Activated naive CD4-positive, alpha-beta T cell treated with anti-CD3 and anti-CD28 coated beads for 36 hours (primary cell): ENCODE measurements at regions of chr9 and their contacts with region 1.

Region 1: GRCh38 chr9:6667633-6668280 is 22.2 kb upstream of the GLDC start:
- DNase-seq: no peak
- H3K4me3 Mint-ChIP-seq: no peak overlapping the region
- H3K27ac Mint-ChIP-seq: no peak overlapping the region
- H3K4me1 Mint-ChIP-seq: peaks cover 2% of the 10 kb centered on the region
- H3K27me3 Mint-ChIP-seq: no peaks in the 10 kb centered on the region

Region 2: DNA sequence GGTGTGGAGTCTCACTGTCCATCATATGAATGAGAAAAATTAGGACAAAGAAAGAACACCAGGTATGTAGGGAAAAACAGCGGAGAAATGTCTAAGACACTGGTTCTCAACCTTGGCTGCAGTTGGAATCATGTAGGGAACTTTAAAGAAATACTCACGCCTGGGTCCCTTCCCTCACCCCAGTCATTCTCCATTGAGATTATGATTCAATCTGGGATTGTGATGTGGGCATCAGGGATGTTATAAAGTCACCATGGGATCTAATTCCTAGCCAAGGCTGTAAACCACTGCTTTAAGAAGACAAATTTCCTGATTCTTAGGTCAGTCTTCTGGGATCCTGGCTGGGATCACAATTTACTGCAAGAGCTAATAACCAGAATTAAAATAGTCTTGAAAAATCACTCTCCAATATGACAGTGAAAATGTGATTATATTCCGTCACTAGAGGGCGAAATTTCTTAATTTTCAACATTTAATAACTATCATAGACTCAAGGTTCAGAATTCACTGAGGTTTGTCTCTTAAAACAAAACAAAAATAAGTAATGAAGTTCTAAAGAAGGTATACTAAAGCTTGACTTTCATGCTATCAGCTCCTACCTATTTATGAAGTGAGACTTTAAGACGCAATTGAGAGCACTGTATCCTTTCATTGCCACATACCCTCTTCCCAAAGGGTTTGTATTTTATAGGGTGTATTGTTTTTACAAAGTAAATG is 82.7 kb before region 1 on chr9:
- CTCF ChIA-PET with region 1: interaction called, 23 read pairs
- intact Hi-C with region 1: loop called (anchors 1 kb)
- DNase-seq: no peak
- H3K4me3 Mint-ChIP-seq: no peak overlapping the region
- H3K27ac Mint-ChIP-seq: no peak overlapping the region
- H3K4me1 Mint-ChIP-seq: no peaks in the 10 kb centered on the region
- H3K27me3 Mint-ChIP-seq: no peaks in the 10 kb centered on the region

Region 3: DNA sequence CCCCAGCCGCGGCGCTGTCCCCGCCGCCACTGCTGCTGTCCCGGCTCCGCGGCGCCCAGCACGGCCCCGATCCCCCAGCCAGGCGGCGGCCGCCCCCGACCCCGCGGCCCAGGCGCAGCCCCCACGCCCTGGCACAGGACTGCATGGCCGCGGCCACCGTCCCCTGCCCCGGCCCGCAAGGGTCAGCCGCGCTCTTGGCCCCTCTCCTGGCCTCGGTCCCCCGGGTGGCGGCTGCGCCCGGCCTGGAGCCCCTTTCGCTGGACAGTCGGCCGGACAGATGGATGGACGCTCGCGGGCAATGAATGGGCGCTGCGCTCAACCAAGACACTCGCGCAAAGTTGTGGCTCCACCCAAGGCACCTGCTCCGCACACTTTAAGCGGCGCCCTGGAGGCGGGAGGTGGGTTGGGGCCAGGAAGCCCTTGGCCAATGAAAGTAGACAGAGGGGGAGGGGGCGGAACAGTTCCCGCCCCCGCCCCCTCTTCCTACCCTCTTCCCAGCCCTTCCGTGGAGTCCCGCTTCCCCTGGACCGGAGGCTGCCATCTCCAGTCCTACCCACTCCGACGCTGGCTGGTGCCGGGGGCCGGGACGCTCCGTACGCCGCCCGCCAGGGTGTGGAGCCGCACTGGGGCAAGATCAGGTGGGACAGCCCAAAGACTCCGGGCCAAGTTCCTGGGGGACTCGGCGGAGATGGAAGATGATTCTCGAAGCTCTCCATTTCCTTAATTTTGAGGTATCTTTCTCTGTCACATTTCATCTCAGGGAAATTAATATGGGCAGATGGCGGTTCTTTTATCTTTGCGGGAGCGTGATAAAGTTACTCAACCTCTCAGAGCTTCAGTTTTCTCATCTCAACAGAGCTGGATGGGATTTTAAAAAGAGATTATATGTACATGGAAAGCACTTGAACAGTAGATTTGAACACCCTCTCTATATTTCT is 22.1 kb before region 1 on chr9 and contains the start of gene GLDC:
- CTCF ChIA-PET with region 1: interaction called, 4 read pairs
- intact Hi-C with region 1: loop called (anchors 2 kb)
- DNase-seq: peak; percentile 62
- H3K4me3 Mint-ChIP-seq: peak within 1 kb of the TSS; percentile 76
- H3K27ac Mint-ChIP-seq: no peak within 1 kb of the TSS
- H3K4me1 Mint-ChIP-seq: peaks cover 19% of the 10 kb centered on the region
- H3K27me3 Mint-ChIP-seq: peaks cover 45% of the 10 kb centered on the region
- total RNA-seq, gene GLDC: 1.7 to 1.9 TPM